Activated CD4-positive, alpha-beta T cell treated with anti-CD3 and anti-CD28 coated beads, Interleukin-2, amount 10 ng/mL, durations not matched to agents 24 days and 14 days (primary cell): ENCODE measurements at regions of chr18 and their contacts with region 1.

Region 1: GRCh38 chr18:57004366-57005121 is 142.3 kb upstream of the BOD1L2 start:
- DNase-seq: no peak
- H3K4me3 Mint-ChIP-seq: peak overlapping the region; percentile 40
- H3K27ac Mint-ChIP-seq: peak overlapping the region; percentile 73
- H3K4me1 Mint-ChIP-seq: peaks cover 21% of the 10 kb centered on the region
- H3K27me3 Mint-ChIP-seq: no peaks in the 10 kb centered on the region

Region 2: GRCh38 chr18:56468396-56468795 is 536.1 kb before region 1 on chr18:
- intact Hi-C with region 1: no loop called
- DNase-seq: no peak
- H3K4me3 Mint-ChIP-seq: no peak overlapping the region
- H3K27ac Mint-ChIP-seq: no peak overlapping the region
- H3K4me1 Mint-ChIP-seq: no peaks in the 10 kb centered on the region
- H3K27me3 Mint-ChIP-seq: no peaks in the 10 kb centered on the region

Region 3: GRCh38 chr18:56716692-56717146 is 287.8 kb before region 1 on chr18:
- intact Hi-C with region 1: loop called (anchors 5 kb)
- DNase-seq: no peak
- H3K4me3 Mint-ChIP-seq: no peak overlapping the region
- H3K27ac Mint-ChIP-seq: peak overlapping the region; percentile 63
- H3K4me1 Mint-ChIP-seq: peaks cover 26% of the 10 kb centered on the region
- H3K27me3 Mint-ChIP-seq: no peaks in the 10 kb centered on the region

Region 4: DNA sequence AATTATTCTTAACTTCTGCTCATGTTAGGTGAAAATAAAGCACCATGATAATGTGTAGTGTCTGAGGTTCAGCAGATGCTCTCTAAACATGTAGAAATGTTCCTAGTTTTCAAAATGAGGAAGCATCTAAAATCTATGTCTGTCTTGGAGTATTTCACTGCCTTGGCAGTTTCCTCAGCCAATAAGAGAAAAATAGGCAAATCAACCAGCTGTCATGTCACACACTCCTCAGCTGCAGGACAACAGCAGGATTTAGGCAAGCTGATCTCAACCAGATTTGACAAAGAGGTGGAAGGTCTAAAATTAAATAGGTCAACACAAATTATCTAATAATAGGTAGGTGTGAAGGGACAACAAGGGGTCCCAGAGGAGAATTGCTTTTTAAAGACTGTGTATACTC is 21.8 kb before region 1 on chr18:
- intact Hi-C with region 1: no loop called
- DNase-seq: no peak
- H3K4me3 Mint-ChIP-seq: no peak overlapping the region
- H3K27ac Mint-ChIP-seq: no peak overlapping the region
- H3K4me1 Mint-ChIP-seq: peaks cover 3% of the 10 kb centered on the region
- H3K27me3 Mint-ChIP-seq: no peaks in the 10 kb centered on the region

Region 5: DNA sequence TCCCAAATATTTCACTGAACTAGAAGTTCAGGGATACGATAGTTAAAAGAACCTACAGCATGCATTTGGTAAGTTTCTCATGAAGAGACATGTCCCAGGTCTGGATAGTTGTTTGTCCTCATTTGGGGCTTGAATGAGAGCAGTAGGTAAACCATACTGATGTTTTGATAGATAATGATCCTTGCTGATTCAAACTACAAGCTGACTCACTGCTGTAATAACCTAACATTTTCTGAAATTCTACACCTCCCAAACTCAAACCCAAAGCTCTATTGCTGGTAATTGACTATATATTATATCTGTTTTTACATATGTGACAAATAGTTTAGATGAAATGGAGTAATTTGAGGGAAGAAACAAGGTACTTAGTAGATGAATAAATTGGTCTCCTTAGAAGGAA is 11.8 kb before region 1 on chr18:
- intact Hi-C with region 1: loop called (anchors 1 kb)
- DNase-seq: no peak
- H3K4me3 Mint-ChIP-seq: no peak overlapping the region
- H3K27ac Mint-ChIP-seq: peak overlapping the region; percentile 72
- H3K4me1 Mint-ChIP-seq: peaks cover 12% of the 10 kb centered on the region
- H3K27me3 Mint-ChIP-seq: no peaks in the 10 kb centered on the region

Region 6: DNA sequence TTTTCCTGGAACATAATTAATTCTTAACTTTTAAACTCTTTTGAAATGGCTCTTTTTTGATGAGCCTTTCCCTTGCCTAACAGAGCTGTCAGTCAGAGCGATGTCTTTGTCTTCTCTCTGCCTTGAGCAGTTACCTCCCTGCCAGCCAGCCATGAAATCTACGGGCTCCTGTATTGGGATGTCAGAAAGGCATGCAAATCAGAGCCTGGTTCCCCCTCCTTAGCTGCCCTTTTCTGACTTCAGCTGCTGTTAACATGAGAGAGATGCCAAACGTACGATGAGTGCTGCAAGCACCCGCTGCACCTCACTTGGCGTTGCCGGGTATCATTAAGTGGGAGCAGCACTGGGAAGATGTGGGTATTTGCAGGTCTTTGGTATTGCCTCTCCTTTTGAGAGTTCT is 10.9 kb after region 1 on chr18:
- intact Hi-C with region 1: loop called (anchors 1 kb)
- DNase-seq: no peak
- H3K4me3 Mint-ChIP-seq: no peak overlapping the region
- H3K27ac Mint-ChIP-seq: no peak overlapping the region
- H3K4me1 Mint-ChIP-seq: peaks cover 16% of the 10 kb centered on the region
- H3K27me3 Mint-ChIP-seq: no peaks in the 10 kb centered on the region

Region 7: GRCh38 chr18:58847383-58848071 is 1843.0 kb after region 1 on chr18:
- intact Hi-C with region 1: no loop called
- DNase-seq: no peak
- H3K4me3 Mint-ChIP-seq: no peak overlapping the region
- H3K27ac Mint-ChIP-seq: no peak overlapping the region
- H3K4me1 Mint-ChIP-seq: no peaks in the 10 kb centered on the region
- H3K27me3 Mint-ChIP-seq: peaks cover 51% of the 10 kb centered on the region